Activated B cell treated with CpG ODN at 0.5 μM for 24 hours (primary cell): ENCODE measurements at regions of chr12 and their contacts with region 1.

Region 1: DNA sequence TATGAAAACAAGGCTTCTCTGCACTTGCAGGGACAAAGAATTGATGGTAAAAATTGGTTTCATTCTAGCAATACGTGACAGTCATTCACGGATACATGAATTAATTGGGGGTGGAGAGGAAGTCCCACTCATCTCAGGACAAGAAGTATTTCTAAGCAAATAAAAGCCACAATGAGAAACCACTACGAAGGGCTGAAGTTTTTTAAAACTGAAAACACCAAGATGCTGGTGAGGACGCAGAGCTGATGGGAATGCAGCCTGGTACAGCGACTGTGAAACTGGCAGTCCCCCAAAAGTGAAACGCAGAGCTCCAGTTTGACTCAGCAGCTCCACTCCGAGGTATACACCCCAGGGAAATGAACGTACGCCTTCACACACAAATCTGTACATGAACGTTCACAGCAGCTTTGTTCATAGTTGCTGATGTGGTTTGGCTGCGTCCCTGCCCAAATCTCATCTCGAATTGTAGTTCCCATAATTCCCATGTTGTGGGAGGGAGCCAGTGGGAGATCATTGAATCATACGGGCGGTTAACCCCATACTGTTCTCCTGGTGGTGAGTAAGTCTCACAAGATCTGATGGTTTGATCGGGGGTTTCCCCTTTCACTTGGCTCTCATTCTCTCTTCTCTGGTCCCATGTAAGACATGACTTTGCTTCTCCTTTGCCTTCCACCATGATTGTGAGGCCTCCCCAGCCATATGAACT is 89.0 kb downstream of the SCARB1 start:
- DNase-seq: peak; percentile 48
- ATAC-seq: peak; percentile 87
- H3K4me3 Mint-ChIP-seq: peak overlapping the region; percentile 74
- H3K27ac Mint-ChIP-seq: peak overlapping the region; percentile 97
- H3K4me1 Mint-ChIP-seq: peaks cover 47% of the 10 kb centered on the region
- H3K27me3 Mint-ChIP-seq: peaks cover 7% of the 10 kb centered on the region
- CTCF ChIP-seq: no peak

Region 2: GRCh38 chr12:123972457-123973401 is 801.9 kb before region 1 on chr12 and contains the starts of genes CCDC92 and ZNF664:
- CTCF ChIA-PET with region 1: no interaction called
- POLR2A ChIA-PET with region 1: no interaction called
- intact Hi-C with region 1: loop called (anchors 1 kb)
- DNase-seq: peak; percentile 98
- ATAC-seq: peak; percentile 84
- H3K4me3 Mint-ChIP-seq: peak within 1 kb of the TSS; percentile 92
- H3K27ac Mint-ChIP-seq: peak within 1 kb of the TSS; percentile 88
- H3K4me1 Mint-ChIP-seq: peaks cover 15% of the 10 kb centered on the region
- H3K27me3 Mint-ChIP-seq: no peaks in the 10 kb centered on the region
- CTCF ChIP-seq: no peak
- total RNA-seq, gene CCDC92: 21.5 and 23.7 TPM in 2 replicates
- total RNA-seq, gene ZNF664: 35.6 and 40.7 TPM in 2 replicates

Region 3: DNA sequence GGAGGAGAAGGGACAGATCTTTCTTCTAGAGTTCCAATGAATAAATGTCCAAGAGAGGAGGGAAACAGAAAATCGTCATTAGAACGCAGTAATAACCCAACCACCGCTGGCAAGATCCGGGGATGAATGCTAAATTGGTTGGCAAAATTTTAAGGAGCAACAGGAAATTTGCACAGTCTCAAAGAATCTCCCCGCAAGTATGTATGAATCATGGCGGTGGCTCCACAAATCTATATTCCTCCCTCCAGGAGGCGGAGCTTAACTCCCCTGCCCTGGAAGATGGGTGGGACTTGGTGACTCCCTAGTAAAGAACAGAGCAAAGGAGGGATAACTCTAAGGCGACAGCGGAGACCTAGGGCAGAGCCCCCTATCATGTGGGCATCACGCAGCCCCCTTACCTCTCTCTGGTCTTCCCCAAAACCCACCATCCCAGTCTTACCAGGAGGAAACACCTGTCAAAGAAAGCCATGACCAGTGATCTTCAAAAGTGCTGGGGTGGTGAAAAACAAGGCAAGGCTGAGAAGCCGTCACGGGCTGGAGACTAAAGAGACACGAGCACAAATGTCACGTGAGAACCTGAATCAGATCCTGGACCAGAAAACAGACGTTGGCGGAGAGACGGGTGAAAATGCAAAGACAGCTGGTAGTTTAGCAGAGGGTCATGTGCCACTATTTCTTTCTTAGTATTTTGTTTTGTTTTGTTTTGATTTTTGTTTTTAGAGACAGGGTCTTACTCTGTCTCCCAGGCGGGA is 333.0 kb before region 1 on chr12:
- CTCF ChIA-PET with region 1: no interaction called
- POLR2A ChIA-PET with region 1: no interaction called
- intact Hi-C with region 1: no loop called
- DNase-seq: no peak
- ATAC-seq: no peak
- H3K4me3 Mint-ChIP-seq: no peak overlapping the region
- H3K27ac Mint-ChIP-seq: peak overlapping the region; percentile 11
- H3K4me1 Mint-ChIP-seq: peaks cover 5% of the 10 kb centered on the region
- H3K27me3 Mint-ChIP-seq: no peaks in the 10 kb centered on the region
- CTCF ChIP-seq: no peak

Region 4: DNA sequence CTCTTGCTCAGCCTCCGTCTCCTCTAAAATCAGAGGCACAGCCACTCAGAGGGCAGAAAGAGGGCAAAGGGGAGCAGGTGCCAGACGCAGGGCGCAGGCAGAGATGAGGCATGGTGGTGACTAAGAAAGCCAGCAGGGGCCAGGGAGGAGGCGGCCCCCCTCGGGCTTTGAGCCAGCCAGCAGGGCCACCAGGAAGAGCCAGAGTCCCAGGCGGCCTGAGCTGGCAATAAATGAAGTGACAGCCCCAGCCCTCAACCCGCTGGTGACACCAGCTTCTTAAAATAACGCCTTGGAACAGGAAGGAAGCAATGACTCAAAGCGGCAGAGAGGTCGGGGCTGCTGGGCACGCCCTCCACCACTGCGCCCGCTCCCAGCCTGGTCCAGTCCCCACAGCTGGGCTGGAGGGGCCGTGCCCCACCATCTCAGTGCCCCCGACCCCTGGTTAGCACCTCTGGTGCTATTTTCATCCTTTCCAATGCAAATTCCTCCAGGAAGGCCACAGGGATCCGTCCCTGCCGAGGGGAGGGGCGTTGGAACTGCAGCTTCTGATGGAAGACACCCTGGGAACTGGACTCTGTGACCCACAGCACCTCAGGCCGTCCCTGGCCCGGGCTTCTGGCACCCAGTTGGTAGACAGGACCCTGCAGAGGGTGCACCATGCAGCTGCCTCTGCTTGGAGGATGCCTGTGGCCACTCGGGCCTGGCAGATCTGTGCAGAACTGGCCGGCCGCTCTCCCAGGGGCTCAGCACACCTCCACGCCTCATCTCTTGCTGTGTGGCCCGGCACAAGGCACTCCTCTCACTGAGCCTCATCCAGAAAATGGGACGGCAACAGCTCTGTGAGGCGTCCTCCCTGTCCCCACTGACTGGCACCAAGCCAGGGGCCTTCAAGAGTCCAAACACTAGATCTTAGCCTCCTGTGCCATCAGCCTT is 320.9 kb before region 1 on chr12:
- CTCF ChIA-PET with region 1: no interaction called
- POLR2A ChIA-PET with region 1: interaction called, 8 read pairs
- intact Hi-C with region 1: loop called (anchors 1 kb)
- DNase-seq: peak; percentile 67
- ATAC-seq: peak; percentile 68
- H3K4me3 Mint-ChIP-seq: peak overlapping the region; percentile 69
- H3K27ac Mint-ChIP-seq: peak overlapping the region; percentile 76
- H3K4me1 Mint-ChIP-seq: peaks cover 75% of the 10 kb centered on the region
- H3K27me3 Mint-ChIP-seq: no peaks in the 10 kb centered on the region
- CTCF ChIP-seq: no peak

Region 5: GRCh38 chr12:124592472-124593160 is 182.0 kb before region 1 on chr12:
- CTCF ChIA-PET with region 1: no interaction called
- POLR2A ChIA-PET with region 1: interaction called, 17 read pairs
- intact Hi-C with region 1: no loop called
- DNase-seq: peak; percentile 30
- ATAC-seq: peak; percentile 90
- H3K4me3 Mint-ChIP-seq: peak overlapping the region; percentile 54
- H3K27ac Mint-ChIP-seq: peak overlapping the region; percentile 72
- H3K4me1 Mint-ChIP-seq: peaks cover 36% of the 10 kb centered on the region
- H3K27me3 Mint-ChIP-seq: peaks cover 2% of the 10 kb centered on the region
- CTCF ChIP-seq: no peak

Region 6: DNA sequence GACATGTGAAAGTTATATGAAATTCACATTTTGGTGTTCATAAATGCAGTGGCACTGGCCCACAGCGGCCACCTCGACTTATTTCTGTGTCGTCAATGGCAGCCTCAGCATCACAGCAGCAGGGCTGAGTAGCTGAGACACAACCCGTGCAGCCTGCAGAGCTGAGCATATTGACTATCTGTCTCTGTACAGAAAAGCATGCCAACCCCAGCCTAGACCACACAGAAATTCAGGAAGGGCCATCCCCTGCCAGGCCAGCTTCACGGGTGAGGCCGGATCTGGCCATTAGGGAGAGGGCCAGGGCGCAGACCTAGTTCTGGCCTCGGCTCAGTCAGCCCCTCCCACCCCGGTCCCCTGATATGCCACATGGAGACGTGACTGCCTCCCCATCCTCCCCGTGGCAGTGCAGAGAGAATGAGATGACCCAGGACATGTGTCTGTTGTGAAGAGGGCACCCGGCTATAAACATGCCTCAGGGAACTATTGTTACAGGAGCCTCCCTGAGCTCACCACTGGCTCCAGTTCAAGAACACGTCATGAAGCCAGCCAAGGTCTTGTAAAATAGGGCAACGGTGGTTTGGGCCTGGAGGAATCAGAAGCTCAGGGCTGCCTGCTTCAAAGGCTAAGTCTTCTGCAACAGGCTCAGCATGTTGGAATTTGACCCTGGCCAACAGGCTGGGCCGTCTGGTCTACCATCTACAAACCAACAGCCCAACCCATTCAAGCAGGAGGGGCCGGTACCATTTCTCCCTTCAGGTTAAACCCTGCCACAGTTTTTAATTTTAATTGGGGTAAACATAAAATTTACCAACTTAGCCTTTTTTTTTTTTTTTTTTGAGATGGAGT is 63.6 kb after region 1 on chr12:
- CTCF ChIA-PET with region 1: no interaction called
- POLR2A ChIA-PET with region 1: no interaction called
- intact Hi-C with region 1: no loop called
- DNase-seq: no peak
- ATAC-seq: no peak
- H3K4me3 Mint-ChIP-seq: no peak overlapping the region
- H3K27ac Mint-ChIP-seq: no peak overlapping the region
- H3K4me1 Mint-ChIP-seq: no peaks in the 10 kb centered on the region
- H3K27me3 Mint-ChIP-seq: no peaks in the 10 kb centered on the region
- CTCF ChIP-seq: no peak

Region 7: DNA sequence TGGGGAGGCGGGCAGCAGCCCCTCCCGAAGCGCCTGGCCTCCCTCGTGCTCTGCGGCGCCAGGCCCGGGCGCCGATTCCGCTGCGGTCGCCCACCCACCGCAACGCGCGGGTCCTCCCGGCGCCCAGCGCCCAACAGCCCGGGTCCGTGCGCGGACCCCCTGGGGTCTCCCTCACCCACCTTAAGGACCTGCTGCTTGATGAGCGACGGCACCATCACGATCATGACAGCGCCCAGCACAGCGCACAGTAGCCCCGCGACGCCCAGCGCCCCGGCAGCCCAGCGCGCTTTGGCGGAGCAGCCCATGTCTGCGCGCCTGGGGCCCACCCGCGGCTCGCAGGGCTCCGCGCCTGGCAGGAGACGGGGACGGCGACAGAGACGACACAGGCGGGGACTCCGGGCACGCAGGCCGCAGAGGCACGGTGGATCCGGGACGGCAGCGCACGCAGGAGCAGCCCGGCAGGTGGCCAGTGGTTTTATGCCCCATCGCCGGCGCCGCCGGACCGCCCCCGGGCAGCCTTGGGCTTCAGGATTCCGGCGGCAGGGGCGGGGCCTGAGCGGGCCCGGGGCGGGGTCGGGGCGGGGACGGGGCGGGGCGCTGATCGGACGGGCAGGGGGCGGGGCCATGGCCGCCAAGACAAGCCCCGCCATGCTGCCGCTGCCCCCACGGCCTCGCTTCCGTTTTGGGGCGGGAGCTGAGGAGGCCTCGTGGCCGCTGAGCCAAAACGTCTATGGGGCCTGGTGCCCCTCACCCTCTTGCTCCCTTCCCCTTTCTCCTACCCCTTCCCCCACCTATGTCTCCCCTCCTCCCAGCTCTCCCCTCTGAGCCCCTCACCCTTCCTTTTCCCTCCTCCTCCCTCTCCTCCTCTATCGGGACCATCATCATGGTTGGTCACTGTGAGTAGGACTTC is 89.1 kb after region 1 on chr12 and contains the start of gene SCARB1:
- CTCF ChIA-PET with region 1: interaction called, 3 read pairs
- POLR2A ChIA-PET with region 1: interaction called, 23 read pairs
- intact Hi-C with region 1: loop called (anchors 1 kb)
- DNase-seq: peak; percentile 80
- ATAC-seq: peak; percentile 85
- H3K4me3 Mint-ChIP-seq: peak within 1 kb of the TSS; percentile 83
- H3K27ac Mint-ChIP-seq: peak within 1 kb of the TSS; percentile 91
- H3K4me1 Mint-ChIP-seq: peaks cover 40% of the 10 kb centered on the region
- H3K27me3 Mint-ChIP-seq: no peaks in the 10 kb centered on the region
- CTCF ChIP-seq: no peak
- total RNA-seq, gene SCARB1: 39.3 and 40.8 TPM in 2 replicates

Region 8: DNA sequence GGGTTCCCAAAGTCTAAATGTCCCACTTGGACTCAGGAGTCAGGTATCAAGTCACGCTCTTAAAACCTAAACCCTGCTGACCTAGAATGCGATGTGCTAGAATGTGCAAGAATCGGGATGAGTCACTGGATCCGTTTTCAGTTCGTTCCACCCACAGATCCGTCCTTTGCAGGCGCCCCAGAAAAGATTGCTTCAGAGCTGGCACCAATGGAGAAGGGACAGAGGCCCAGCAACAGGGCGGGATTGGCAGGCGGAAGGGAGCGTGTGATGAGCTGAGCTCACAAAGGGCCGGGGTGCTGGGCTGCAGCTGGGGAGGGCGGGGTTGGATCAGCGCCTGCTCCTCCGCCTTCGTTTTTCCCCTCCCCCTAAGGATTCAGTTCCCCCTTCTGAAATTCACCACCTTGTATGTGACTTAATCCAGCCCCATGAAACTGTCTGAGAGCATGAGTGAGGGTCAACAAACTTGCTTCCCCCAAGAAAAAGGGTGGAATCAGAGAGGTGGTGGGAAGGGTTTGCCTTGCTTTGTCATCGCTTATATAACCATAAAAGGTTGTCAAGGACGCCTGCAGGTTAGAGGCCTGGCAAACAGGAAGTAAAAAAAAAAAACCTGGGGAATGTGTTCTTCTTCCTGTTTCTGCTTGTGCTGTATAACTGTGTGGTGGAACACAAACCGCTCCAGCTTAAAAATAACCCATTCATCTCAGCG is 142.7 kb after region 1 on chr12:
- CTCF ChIA-PET with region 1: no interaction called
- POLR2A ChIA-PET with region 1: interaction called, 17 read pairs
- intact Hi-C with region 1: loop called (anchors 1 kb)
- DNase-seq: peak; percentile 77
- ATAC-seq: peak; percentile 63
- H3K4me3 Mint-ChIP-seq: peak overlapping the region; percentile 100
- H3K27ac Mint-ChIP-seq: peak overlapping the region; percentile 100
- H3K4me1 Mint-ChIP-seq: peaks cover 91% of the 10 kb centered on the region
- H3K27me3 Mint-ChIP-seq: no peaks in the 10 kb centered on the region
- CTCF ChIP-seq: no peak